Naive thymus-derived CD4-positive, alpha-beta T cell (primary cell): ENCODE measurements at regions of chr1 and their contacts with region 1.

Region 1: DNA sequence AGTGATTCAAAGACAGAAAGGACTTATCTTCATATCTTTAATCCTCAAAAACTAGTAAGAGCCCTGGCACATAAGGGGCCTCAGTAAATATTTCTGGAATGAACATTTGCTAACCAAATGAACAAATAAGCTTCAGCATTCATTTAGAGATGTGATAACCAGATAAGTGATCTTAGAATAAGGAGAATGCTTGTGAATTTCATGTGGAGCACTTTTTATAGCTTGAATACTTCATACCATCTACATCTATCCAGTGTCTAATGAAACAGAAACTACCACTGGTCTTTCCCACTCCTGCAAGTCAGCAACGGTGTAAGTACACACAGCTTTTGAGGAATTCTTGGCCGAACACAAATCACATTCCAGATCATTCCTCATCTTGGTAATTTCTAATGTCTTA is 38.5 kb downstream of the EDEM3 start:
- DNase-seq: no peak
- ATAC-seq: no peak
- H3K4me3 ChIP-seq: no peak overlapping the region
- H3K4me3 Mint-ChIP-seq: no peak overlapping the region
- H3K27ac ChIP-seq: no peak overlapping the region
- H3K27ac Mint-ChIP-seq: peak overlapping the region in 4 of 9 donors; percentile 6 to 48 (median 14)
- H3K4me1 ChIP-seq: no peaks in the 10 kb centered on the region
- H3K4me1 Mint-ChIP-seq: peaks cover 0 to 5% (median 0%) of the 10 kb centered on the region in 7 donors
- H3K27me3 ChIP-seq: no peaks in the 10 kb centered on the region
- H3K27me3 Mint-ChIP-seq: no peaks in the 10 kb centered on the region

Region 2: GRCh38 chr1:184734980-184735379 is 18.8 kb after region 1 on chr1:
- CTCF ChIA-PET with region 1: interaction called, 3 read pairs
- POLR2A ChIA-PET with region 1: interaction called, 3 read pairs
- intact Hi-C with region 1: loop called in 1 of 2 experiments (anchors 2 kb)
- DNase-seq: no peak
- ATAC-seq: no peak
- H3K4me3 ChIP-seq: no peak overlapping the region
- H3K4me3 Mint-ChIP-seq: no peak overlapping the region
- H3K27ac ChIP-seq: no peak overlapping the region
- H3K27ac Mint-ChIP-seq: peak overlapping the region in 1 of 9 donors; percentile 2
- H3K4me1 ChIP-seq: no peaks in the 10 kb centered on the region
- H3K4me1 Mint-ChIP-seq: peaks cover 9 to 33% (median 18%) of the 10 kb centered on the region in 7 donors
- H3K27me3 ChIP-seq: no peaks in the 10 kb centered on the region
- H3K27me3 Mint-ChIP-seq: no peaks in the 10 kb centered on the region